Prostate gland (tissue), 2 donors: ENCODE measurements at regions of chr2 and their contacts with region 1.

Region 1: GRCh38 chr2:68709421-68709911 is 25.1 kb upstream of the ARHGAP25 start:
- DNase-seq: no peak
- H3K4me3 ChIP-seq: no peak overlapping the region
- H3K27ac ChIP-seq: no peak overlapping the region
- H3K4me1 ChIP-seq: no peaks in the 10 kb centered on the region
- H3K27me3 ChIP-seq: peaks cover 2% of the 10 kb centered on the region
- CTCF ChIP-seq: peak; percentile 40 to 72 (median 50)
- POLR2A ChIP-seq: no peak

Region 2: DNA sequence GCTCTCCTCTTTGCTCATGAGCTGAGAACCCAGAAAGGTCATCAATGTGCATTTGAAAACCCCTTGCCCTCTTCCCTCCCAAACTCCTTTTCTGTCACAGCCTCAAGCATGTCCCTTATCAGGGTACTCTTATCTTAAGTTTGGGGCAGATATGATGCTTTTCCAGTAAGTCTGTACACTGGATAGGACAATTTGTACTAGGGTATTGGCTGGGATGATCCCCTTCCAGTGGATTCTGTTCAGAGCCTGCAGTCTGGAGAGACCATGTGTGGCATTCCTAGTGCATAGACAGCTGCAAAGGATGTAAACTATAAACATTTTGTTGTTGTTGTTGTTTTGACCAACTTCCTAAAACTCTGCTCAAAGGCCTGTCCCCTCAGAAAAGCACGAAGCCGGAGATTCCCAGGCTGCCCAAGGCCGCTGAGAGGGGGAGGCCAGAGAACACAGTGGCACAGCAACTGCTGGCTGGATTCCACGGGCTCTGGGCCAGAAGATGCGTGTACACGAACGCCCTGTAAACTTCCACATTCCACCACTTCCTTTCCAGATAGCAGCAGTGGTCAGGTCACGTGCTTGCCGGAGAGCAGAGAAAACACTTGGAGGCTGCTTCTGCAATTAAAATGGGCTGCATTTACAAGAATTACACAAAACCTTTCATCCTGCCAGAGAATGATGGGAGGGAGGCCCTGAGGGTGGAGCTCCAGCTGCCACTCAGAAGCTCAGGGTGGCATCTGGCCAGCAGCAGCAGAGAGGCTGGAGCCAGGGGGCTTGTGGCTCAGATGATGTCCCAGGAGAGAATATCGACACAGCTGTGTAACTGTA is 119.6 kb after region 1 on chr2:
- intact Hi-C with region 1: no loop called
- DNase-seq: peak; percentile 95
- H3K4me3 ChIP-seq: no peak overlapping the region
- H3K27ac ChIP-seq: peak overlapping the region; percentile 8 to 36
- H3K4me1 ChIP-seq: peaks cover 4% of the 10 kb centered on the region
- H3K27me3 ChIP-seq: no peaks in the 10 kb centered on the region
- CTCF ChIP-seq: no peak
- POLR2A ChIP-seq: no peak

Region 3: GRCh38 chr2:68925295-68925896 is 215.9 kb after region 1 on chr2:
- intact Hi-C with region 1: loop called (anchors 5 kb)
- DNase-seq: peak; percentile 40
- H3K4me3 ChIP-seq: no peak overlapping the region
- H3K27ac ChIP-seq: no peak overlapping the region
- H3K4me1 ChIP-seq: no peaks in the 10 kb centered on the region
- H3K27me3 ChIP-seq: no peaks in the 10 kb centered on the region
- CTCF ChIP-seq: peak; percentile 70 to 90 (median 79)
- POLR2A ChIP-seq: no peak